Ascending aorta (tissue), 2 donors: ENCODE measurements at regions of chr19 and their contacts with region 1.

Region 1: DNA sequence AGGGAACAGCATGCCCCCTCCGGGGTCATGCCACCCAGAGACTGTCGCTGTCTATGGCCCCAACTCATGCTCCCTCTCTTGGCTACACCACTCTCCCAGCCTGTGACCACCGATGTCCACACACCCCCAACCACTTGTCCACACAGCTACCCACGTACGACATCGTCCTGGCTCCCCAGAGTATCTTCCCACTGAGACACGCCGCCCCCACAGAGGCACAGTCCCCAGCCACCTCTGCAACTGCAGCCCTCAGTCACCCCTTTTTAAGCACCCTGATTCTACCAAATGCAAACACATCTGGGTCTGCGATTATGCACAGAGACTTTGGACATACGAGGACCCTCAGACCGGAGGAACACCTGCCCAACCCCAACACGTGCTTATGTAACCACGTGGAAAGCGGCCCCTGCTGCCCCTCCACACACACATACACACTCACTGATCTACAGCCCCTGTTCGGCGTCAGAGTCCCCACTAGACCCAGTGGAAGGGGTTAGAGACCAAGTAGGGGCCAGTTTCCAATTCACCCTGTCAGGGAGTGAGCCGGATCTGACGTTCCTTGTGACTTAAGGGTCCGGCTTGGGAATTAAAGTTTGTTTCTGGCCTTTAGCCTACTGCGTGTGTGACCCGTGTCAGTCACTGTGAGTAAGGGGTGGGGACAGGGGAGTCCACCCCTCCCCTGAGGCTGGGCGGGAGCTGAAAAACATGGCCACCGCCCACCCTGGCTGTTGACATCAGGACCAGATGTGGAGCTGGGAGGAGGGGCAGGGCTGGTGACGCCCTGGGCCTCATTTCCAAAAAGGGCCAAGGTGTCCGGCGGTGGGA is 11.9 kb upstream of the AXL start:
- DNase-seq: peak in 1 of 2 donors; percentile 86
- H3K4me3 ChIP-seq: peak overlapping the region in 1 of 2 donors; percentile 35
- H3K27ac ChIP-seq: peak overlapping the region; percentile 66 to 70
- H3K4me1 ChIP-seq: no peaks in the 10 kb centered on the region
- H3K27me3 ChIP-seq: no peaks in the 10 kb centered on the region
- CTCF ChIP-seq: no peak

Region 2: GRCh38 chr19:41218615-41219507 is 11.7 kb after region 1 on chr19 and contains the start of gene AXL:
- intact Hi-C with region 1: loop called (anchors 2 kb)
- DNase-seq: peak; percentile 66 to 92
- H3K4me3 ChIP-seq: peak within 1 kb of the TSS; percentile 66 to 68
- H3K27ac ChIP-seq: peak within 1 kb of the TSS; percentile 92 to 95
- H3K4me1 ChIP-seq: peaks cover 0 to 21% of the 10 kb centered on the region in 2 donors
- H3K27me3 ChIP-seq: no peaks in the 10 kb centered on the region
- CTCF ChIP-seq: peak in 1 of 3 experiments; percentile 6
- total RNA-seq, gene AXL: 122 TPM